Activated T-helper 2 cell treated with anti-CD3 and anti-CD28 coated beads, Interferon-gamma antibody, Interleukin-2, Interleukin-4, amounts not matched to agents 10 μg/mL and 5 μg/mL and 100 μg/mL, durations not matched to agents 14 hours and 24 hours and 36 hours (primary cell): ENCODE measurements at regions of chr15 and their contacts with region 1.

Region 1: DNA sequence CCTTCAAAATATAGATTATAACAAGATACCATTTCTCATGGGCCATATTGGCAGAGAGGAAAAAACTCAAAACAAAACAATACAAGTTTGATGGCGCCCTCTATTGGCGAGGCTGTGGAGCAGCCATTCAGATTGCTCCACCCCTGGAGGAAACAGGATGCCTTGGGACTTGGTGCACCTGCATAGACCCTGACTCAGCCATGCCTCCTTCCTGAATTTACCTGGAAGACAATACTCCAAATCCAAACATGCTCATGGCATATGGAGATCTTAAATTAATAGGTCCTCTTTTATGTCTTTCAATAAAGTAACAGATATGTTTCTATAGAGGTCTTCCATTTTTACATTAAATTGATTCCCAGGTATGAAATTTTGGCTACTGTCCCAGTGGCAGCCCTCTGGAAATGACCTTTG is 90.0 kb downstream of the APBA2 start:
- DNase-seq: peak; percentile 43
- H3K4me3 Mint-ChIP-seq: no peak overlapping the region
- H3K27ac Mint-ChIP-seq: no peak overlapping the region
- H3K4me1 Mint-ChIP-seq: peaks cover 6% of the 10 kb centered on the region
- H3K27me3 Mint-ChIP-seq: peaks cover 4% of the 10 kb centered on the region

Region 2: DNA sequence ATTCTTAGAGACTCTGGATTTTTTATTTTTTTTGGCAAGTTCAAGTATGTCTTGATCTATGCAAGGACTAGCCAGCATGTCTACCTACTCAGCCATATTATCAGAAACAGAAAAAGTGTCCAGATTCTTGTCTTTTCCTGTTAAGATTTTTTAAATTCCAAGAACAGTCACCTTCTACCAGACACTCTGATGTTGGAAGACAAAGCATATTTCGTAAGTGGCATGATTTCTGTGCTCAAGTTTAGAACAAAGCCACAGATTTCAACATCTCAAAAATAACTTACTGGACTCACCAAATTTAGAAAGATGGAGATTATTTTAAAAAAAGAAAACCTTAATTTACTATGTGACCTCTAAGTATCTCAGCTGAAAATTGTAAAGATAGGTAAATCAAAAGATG is 189.3 kb before region 1 on chr15:
- intact Hi-C with region 1: loop called (anchors 10 kb)
- DNase-seq: no peak
- H3K4me3 Mint-ChIP-seq: no peak overlapping the region
- H3K27ac Mint-ChIP-seq: no peak overlapping the region
- H3K4me1 Mint-ChIP-seq: no peaks in the 10 kb centered on the region
- H3K27me3 Mint-ChIP-seq: peaks cover 27% of the 10 kb centered on the region

Region 3: GRCh38 chr15:28885630-28886430 is 89.9 kb before region 1 on chr15 and contains the start of gene APBA2:
- intact Hi-C with region 1: loop called (anchors 10 kb)
- DNase-seq: peak; percentile 16
- H3K4me3 Mint-ChIP-seq: peak within 1 kb of the TSS; percentile 56
- H3K27ac Mint-ChIP-seq: no peak within 1 kb of the TSS
- H3K4me1 Mint-ChIP-seq: peaks cover 14% of the 10 kb centered on the region
- H3K27me3 Mint-ChIP-seq: peaks cover 41% of the 10 kb centered on the region
- total RNA-seq, gene APBA2: 1.1 and 1.2 TPM in 2 replicates

Region 4: DNA sequence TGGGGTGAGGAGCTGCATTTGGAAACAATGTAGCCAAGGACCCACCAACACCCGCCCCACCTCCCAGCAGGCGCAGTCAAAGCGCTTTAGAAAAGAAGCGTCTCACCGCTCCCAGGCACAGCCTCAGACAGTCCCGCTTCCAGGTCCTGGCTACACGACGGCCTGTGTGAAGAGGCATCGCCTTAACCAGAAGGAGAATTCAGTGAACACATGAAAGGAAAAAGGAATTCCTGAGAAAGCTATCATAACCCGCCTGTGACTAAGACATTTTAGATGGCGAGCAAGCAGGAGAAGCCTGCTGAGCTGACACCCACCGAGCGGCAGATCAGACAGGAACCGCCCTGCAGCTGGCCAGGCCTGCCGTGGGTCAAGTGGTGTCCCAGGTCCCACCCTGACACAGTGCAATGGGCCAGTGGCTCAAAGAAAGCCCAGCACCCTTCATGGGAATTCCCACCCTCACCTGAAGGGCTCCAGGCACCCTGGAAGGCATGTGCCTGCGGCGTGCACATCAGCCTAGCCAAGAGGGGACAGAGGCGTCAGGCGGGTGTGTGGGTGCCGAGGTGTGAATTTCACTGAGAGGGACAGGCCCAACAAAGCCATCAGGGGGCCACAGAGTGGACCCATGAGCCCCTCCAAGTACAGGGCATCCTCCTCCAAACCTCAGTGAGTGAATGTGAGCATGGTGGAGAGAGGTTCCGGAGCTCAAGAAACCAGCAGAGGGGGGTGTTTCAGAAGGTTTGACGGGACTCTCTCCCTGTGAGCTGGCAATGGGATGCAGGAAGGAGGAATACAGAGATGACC is 149.0 kb after region 1 on chr15:
- intact Hi-C with region 1: no loop called
- DNase-seq: no peak
- H3K4me3 Mint-ChIP-seq: no peak overlapping the region
- H3K27ac Mint-ChIP-seq: no peak overlapping the region
- H3K4me1 Mint-ChIP-seq: no peaks in the 10 kb centered on the region
- H3K27me3 Mint-ChIP-seq: no peaks in the 10 kb centered on the region